ENCODE measurements at regions of chr2 and their contacts with region 1.

Region 1: GRCh38 chr2:219177552-219178376 is at the start of gene RETREG2:
- DNase-seq: peak; percentile 61 to 96 (median 78)
- ATAC-seq: peak; percentile 55
- H3K4me3 ChIP-seq: peak within 1 kb of the TSS; percentile 71 to 82
- H3K4me3 Mint-ChIP-seq: peak within 1 kb of the TSS; percentile 91
- H3K27ac ChIP-seq: peak within 1 kb of the TSS; percentile 97 to 98
- H3K27ac Mint-ChIP-seq: peak within 1 kb of the TSS; percentile 99
- H3K4me1 ChIP-seq: peaks cover 75% of the 10 kb centered on the region
- H3K4me1 Mint-ChIP-seq: peaks cover 75% of the 10 kb centered on the region
- H3K27me3 ChIP-seq: no peaks in the 10 kb centered on the region
- H3K27me3 Mint-ChIP-seq: no peaks in the 10 kb centered on the region
- CTCF ChIP-seq: no peak
- total RNA-seq, gene RETREG2: 76.7 to 79.0 TPM

Region 2: GRCh38 chr2:218568190-218569037 is 609.4 kb before region 1 on chr2 and contains the starts of genes CNOT9 and USP37:
- CTCF ChIA-PET with region 1: no interaction called
- POLR2A ChIA-PET with region 1: interaction called, 4 read pairs
- intact Hi-C with region 1: loop called in 1 of 2 experiments (anchors 5 kb)
- DNase-seq: peak; percentile 99 to 100 (median 100)
- ATAC-seq: peak; percentile 90
- H3K4me3 ChIP-seq: peak within 1 kb of the TSS; percentile 84 to 92
- H3K4me3 Mint-ChIP-seq: peak within 1 kb of the TSS; percentile 96
- H3K27ac ChIP-seq: peak within 1 kb of the TSS; percentile 91 to 99
- H3K27ac Mint-ChIP-seq: peak within 1 kb of the TSS; percentile 98
- H3K4me1 ChIP-seq: peaks cover 45% of the 10 kb centered on the region
- H3K4me1 Mint-ChIP-seq: peaks cover 63% of the 10 kb centered on the region
- H3K27me3 ChIP-seq: no peaks in the 10 kb centered on the region
- H3K27me3 Mint-ChIP-seq: no peaks in the 10 kb centered on the region
- CTCF ChIP-seq: no peak
- total RNA-seq, gene CNOT9: 73.9 to 79.3 TPM
- total RNA-seq, gene USP37: 22.8 to 23.2 TPM

Region 3: DNA sequence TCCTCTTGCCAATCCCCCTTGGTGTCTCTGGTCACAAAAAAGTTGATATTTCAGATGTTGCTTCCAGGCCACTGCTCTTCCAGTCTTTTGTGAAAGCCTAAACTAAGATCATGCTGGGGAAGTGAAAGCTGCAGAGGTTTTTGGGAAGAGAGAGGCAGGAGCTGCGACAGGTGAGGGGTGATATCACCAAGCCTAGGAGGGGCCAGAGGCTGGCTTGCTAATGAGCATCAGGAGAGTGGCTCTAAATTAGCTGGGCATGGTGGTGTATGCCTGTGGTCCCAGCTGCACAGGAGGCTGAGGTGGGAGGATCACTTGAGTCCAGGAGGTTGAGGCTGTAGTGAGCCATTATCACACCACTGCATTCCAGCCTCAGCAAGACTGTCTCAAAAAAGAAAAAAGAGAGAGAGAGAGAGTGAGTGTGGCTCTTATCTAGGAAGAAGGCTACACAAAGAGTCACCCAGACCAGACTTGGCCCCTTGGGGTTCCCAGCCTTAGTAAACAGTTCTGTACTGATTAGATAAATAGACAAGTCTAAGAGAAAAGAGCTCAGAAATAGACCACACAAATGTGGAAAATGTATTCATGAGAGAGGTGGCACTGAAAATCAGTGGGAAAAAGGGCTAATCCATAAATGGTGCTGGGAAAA is 232.9 kb before region 1 on chr2:
- CTCF ChIA-PET with region 1: no interaction called
- POLR2A ChIA-PET with region 1: no interaction called
- intact Hi-C with region 1: no loop called
- DNase-seq: no peak
- ATAC-seq: no peak
- H3K4me3 ChIP-seq: no peak overlapping the region
- H3K4me3 Mint-ChIP-seq: no peak overlapping the region
- H3K27ac ChIP-seq: no peak overlapping the region
- H3K27ac Mint-ChIP-seq: no peak overlapping the region
- H3K4me1 ChIP-seq: no peaks in the 10 kb centered on the region
- H3K4me1 Mint-ChIP-seq: no peaks in the 10 kb centered on the region
- H3K27me3 ChIP-seq: peaks cover 0 to 8% of the 10 kb centered on the region in 2 experiments
- H3K27me3 Mint-ChIP-seq: peaks cover 46% of the 10 kb centered on the region
- CTCF ChIP-seq: no peak

Region 4: DNA sequence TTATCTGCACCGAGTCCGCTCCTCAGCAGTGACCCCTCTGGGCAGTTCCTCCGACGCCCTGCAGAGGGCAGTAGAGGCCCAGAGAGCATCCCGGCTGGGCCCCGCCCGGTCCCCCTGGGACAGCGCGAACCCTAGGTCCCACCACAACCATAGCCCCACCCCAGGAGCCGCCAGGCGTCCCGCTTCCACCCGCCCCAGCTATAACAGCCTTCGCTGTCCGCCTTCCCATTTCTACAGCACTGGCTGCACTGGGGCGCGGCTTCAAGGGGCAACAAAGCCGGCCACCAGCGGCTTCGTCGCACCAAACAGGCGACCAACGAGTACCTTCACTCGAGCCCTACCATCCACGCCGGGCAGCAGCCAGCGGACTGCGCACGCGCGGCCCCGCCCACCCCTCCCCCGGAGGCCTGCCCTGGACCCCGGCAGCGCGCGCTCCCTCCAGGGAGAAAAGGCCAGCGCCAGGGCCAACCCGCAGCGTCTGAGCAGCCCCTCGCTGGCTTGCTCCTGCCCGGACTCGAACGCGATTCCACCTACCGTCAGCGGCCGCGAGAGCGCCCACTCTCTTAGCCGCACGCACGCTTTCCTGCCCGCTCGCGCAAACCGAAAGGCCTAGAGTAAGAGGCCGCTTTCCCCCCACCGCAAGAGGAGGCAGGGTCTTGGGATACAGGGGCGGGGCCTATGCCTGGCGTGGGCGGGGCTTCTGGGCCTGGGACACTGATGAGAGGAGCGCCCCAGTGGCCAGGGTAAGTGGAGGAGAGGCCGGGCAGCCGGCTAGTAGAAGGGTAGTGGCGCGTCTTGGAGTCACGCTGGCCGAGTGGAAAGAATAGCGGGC is 17.4 kb before region 1 on chr2 and contains the start of gene NHEJ1:
- CTCF ChIA-PET with region 1: interaction called, 101 read pairs
- POLR2A ChIA-PET with region 1: interaction called, 22 read pairs
- intact Hi-C with region 1: loop called (anchors 1 kb)
- DNase-seq: peak; percentile 83 to 97 (median 92)
- ATAC-seq: peak; percentile 88
- H3K4me3 ChIP-seq: peak within 1 kb of the TSS; percentile 59 to 77
- H3K4me3 Mint-ChIP-seq: peak within 1 kb of the TSS; percentile 93
- H3K27ac ChIP-seq: peak within 1 kb of the TSS; percentile 60 to 69
- H3K27ac Mint-ChIP-seq: peak within 1 kb of the TSS; percentile 95
- H3K4me1 ChIP-seq: peaks cover 11% of the 10 kb centered on the region
- H3K4me1 Mint-ChIP-seq: peaks cover 16% of the 10 kb centered on the region
- H3K27me3 ChIP-seq: no peaks in the 10 kb centered on the region
- H3K27me3 Mint-ChIP-seq: no peaks in the 10 kb centered on the region
- CTCF ChIP-seq: peak; percentile 97
- total RNA-seq, gene NHEJ1: 7.2 to 8.1 TPM

Region 5: DNA sequence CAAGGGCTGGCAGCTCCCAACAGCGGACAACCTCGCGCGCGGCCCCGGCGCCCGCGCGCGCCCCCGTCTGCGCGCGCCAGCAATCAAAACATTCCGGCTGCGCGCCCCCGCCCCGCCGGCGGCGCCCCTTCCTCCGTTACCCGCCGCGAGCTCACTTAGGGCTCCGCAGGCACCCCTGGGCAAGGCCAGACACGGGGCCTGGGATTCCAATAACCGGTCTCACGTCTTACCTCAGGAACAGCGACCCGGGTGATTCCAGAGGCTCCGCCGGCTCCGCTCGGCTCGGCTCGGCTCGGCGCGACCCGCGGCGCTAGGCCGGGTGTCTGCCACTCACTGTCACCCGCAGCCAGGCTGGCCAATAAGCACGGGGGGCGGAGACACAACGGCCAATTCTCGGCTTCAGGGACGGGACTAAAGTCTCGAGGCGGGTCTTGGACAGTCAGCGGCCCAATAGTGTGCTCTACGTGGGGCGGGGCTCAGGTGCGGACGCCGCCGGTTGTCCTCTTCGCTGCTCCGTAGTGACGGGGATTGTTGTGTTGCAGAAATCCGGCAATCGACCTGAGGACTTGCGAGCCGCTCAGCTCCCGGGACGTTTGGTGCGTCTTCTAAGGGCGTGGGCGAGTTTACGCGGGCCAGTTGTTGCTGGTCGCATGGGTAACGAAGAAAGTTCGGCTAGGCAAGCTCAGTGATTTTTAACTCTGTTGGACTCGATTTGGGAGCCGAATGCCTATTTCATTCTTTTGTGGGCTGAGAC is 51.7 kb after region 1 on chr2 and contains the starts of genes ANKZF1 and ATG9A:
- CTCF ChIA-PET with region 1: no interaction called
- POLR2A ChIA-PET with region 1: interaction called, 23 read pairs
- intact Hi-C with region 1: loop called in 1 of 2 experiments (anchors 1 kb)
- DNase-seq: peak; percentile 95 to 99 (median 98)
- ATAC-seq: peak; percentile 96
- H3K4me3 ChIP-seq: peak within 1 kb of the TSS; percentile 83 to 93
- H3K4me3 Mint-ChIP-seq: peak within 1 kb of the TSS; percentile 99
- H3K27ac ChIP-seq: peak within 1 kb of the TSS; percentile 79 to 95
- H3K27ac Mint-ChIP-seq: peak within 1 kb of the TSS; percentile 98
- H3K4me1 ChIP-seq: peaks cover 39% of the 10 kb centered on the region
- H3K4me1 Mint-ChIP-seq: peaks cover 58% of the 10 kb centered on the region
- H3K27me3 ChIP-seq: no peaks in the 10 kb centered on the region
- H3K27me3 Mint-ChIP-seq: no peaks in the 10 kb centered on the region
- CTCF ChIP-seq: no peak
- total RNA-seq, gene ANKZF1: 97.4 to 99.5 TPM
- total RNA-seq, gene ATG9A: 103 to 116 TPM

Region 6: GRCh38 chr2:219278655-219279516 is 101.1 kb after region 1 on chr2 and contains the start of gene DNAJB2:
- CTCF ChIA-PET with region 1: interaction called, 20 read pairs
- POLR2A ChIA-PET with region 1: interaction called, 12 read pairs
- intact Hi-C with region 1: loop called (anchors 1 kb)
- DNase-seq: peak; percentile 97 to 100 (median 99)
- ATAC-seq: peak; percentile 74
- H3K4me3 ChIP-seq: peak within 1 kb of the TSS; percentile 56 to 76
- H3K4me3 Mint-ChIP-seq: peak within 1 kb of the TSS; percentile 90
- H3K27ac ChIP-seq: peak within 1 kb of the TSS; percentile 98 to 99
- H3K27ac Mint-ChIP-seq: peak within 1 kb of the TSS; percentile 99
- H3K4me1 ChIP-seq: peaks cover 31% of the 10 kb centered on the region
- H3K4me1 Mint-ChIP-seq: peaks cover 38% of the 10 kb centered on the region
- H3K27me3 ChIP-seq: no peaks in the 10 kb centered on the region
- H3K27me3 Mint-ChIP-seq: no peaks in the 10 kb centered on the region
- CTCF ChIP-seq: no peak
- total RNA-seq, gene DNAJB2: 108 to 123 TPM

Region 7: GRCh38 chr2:219498280-219499057 is 320.7 kb after region 1 on chr2 and contains the start of gene GMPPA:
- CTCF ChIA-PET with region 1: no interaction called
- POLR2A ChIA-PET with region 1: no interaction called
- intact Hi-C with region 1: no loop called
- DNase-seq: peak; percentile 82 to 95 (median 89)
- ATAC-seq: peak; percentile 90
- H3K4me3 ChIP-seq: peak within 1 kb of the TSS; percentile 75 to 83
- H3K4me3 Mint-ChIP-seq: peak within 1 kb of the TSS; percentile 89
- H3K27ac ChIP-seq: peak within 1 kb of the TSS; percentile 52 to 59
- H3K27ac Mint-ChIP-seq: peak within 1 kb of the TSS; percentile 84
- H3K4me1 ChIP-seq: peaks cover 39% of the 10 kb centered on the region
- H3K4me1 Mint-ChIP-seq: peaks cover 35% of the 10 kb centered on the region
- H3K27me3 ChIP-seq: peaks cover 25 to 34% of the 10 kb centered on the region in 2 experiments
- H3K27me3 Mint-ChIP-seq: peaks cover 33% of the 10 kb centered on the region
- CTCF ChIP-seq: no peak
- total RNA-seq, gene GMPPA: 9.4 to 15.0 TPM

Measured in CD8-positive, alpha-beta T cell (primary cell).